ENCODE measurements at regions of chr4 and their contacts with region 1.

Region 1: DNA sequence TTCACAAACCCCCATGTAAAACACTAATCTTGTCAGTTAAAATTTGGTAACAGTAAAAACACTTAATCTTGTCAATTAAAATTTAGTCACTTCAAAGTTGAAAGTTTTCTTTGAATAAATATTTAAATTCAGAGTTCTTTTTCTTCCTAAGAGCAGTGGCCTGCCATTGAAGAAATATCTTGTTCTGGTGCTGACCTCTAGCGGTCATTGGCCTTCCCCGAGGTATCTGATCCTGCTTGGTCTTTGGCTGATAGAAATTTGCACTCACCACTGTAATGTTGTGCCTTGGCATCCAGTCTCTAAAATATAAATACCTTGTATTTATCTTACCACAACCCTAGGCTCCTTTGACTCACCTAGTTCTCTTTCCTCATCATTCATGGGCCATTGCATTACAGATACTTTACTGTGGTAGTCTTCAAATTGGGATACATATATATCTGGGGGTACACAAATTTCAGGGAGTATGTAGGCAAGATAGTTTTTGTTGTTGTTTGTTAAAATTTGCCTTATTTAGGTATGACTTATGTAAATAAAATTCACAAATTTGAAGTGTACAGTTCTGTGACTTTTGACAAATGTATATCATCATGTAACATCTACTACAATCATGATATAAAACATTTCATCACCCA is 6.7 kb upstream of the ART3 start:
- DNase-seq: peak; percentile 71 to 90 (median 78)
- H3K4me3 ChIP-seq: no peak overlapping the region
- H3K27ac ChIP-seq: no peak overlapping the region
- H3K4me1 ChIP-seq: no peaks in the 10 kb centered on the region
- H3K27me3 ChIP-seq: no peaks in the 10 kb centered on the region
- CTCF ChIP-seq: peak; percentile 63 to 86 (median 69)
- POLR2A ChIP-seq: no peak

Region 2: DNA sequence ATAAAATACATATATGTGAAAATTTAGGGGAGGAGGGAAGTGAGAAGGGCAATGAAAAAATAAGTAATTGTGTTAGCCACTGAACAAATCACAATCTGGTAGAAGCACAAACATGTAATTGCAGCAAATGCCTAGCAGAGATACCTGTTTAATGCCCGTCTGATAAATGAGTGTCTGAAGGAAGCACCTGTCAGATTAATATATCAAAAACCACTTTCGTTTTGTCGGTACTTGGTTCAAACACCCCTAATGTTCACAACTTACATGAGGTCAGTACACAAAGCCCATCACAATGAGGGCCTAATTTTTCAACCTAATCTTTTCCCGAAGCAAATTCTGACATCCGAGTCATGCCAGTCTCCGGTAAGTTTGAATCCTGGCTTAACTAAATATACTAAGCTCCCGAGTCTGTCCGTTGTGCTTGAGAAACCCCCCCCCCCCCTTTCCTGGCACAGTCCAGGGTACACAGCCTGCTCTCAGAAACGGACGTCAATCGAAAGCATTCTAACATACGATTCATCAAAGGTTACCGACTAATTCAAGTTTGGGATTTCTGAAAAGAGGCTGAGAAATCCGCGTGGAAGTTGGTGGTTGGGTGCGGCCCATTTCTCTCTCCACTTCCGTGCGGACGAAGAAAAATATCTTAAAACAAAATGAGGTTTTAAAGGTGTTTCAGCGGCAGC is 77.8 kb before region 1 on chr4:
- intact Hi-C with region 1: loop called (anchors 5 kb)
- DNase-seq: no peak
- H3K4me3 ChIP-seq: peak overlapping the region; percentile 74 to 90 (median 81)
- H3K27ac ChIP-seq: peak overlapping the region in 4 of 5 donors; percentile 33 to 66 (median 56)
- H3K4me1 ChIP-seq: peaks cover 7 to 16% of the 10 kb centered on the region in 2 donors
- H3K27me3 ChIP-seq: no peaks in the 10 kb centered on the region
- CTCF ChIP-seq: no peak
- POLR2A ChIP-seq: no peak

Region 3: DNA sequence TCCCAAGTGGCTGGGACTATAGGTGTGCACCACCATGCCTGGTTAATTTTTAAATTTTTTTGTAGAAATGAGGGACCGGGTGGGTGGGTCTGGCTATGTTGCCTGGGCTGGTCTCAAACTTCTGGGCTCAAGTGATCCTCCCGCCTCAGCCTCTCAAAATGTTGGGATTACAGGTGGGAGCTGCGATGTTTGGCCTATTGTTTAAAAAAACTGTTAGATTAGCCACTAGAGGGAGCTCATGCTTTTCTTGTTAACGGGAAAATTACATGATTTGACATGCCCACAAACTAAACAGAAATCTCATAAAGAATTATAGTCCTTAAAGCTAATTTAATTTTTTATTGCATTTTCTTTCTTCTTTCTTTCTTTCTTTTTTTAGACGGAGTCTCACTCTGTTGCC is 72.0 kb before region 1 on chr4:
- intact Hi-C with region 1: loop called (anchors 5 kb)
- DNase-seq: no peak
- H3K4me3 ChIP-seq: no peak overlapping the region
- H3K27ac ChIP-seq: no peak overlapping the region
- H3K4me1 ChIP-seq: no peaks in the 10 kb centered on the region
- H3K27me3 ChIP-seq: no peaks in the 10 kb centered on the region
- CTCF ChIP-seq: peak; percentile 51 to 77 (median 64)
- POLR2A ChIP-seq: no peak